Adrenal gland (tissue), 19 donors: ENCODE measurements at regions of chr4 and their contacts with region 1.

Region 1: DNA sequence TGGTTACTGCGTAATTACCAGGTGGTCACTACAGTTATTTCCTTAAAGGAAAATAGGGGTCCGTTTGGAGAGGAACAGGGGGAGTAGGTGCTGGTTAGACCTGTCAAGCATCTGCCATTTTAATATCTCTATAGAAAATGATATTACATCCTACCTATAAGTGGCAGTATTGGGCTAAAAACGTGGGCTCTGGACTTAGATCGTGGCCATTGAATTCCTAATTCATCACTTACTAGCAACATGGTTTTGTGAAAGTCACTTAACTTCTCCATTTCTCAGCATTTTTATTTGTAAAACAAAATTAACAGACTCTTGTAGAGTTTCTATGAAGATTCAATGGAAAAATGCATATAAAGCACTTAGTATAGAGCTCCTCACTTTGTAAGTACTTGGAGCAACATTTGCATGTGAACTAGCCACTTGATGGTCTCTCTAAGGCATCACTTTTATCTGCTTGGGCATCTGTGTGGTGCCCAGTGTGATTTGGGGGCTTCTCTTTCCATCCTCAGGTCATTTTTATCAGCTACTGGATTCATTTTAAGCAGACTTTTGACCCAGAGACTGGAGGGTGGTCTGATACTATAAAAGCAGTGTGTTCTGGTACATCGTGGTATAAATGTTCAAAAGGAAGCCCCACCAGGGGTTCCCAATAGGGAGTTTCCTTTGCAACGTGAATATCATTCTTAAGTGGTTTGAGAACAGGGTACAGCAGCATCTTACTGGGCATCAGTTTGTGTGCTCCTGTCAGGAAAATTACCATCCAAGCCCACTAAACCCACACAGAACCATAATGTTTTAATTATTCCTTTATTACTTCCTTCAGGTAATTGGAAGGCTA is 42.7 kb upstream of the RASSF6 start:
- DNase-seq: peak in 1 of 7 donors; percentile 11
- H3K4me3 ChIP-seq: no peak overlapping the region
- H3K27ac ChIP-seq: no peak overlapping the region
- H3K4me1 ChIP-seq: no peaks in the 10 kb centered on the region
- H3K27me3 ChIP-seq: no peaks in the 10 kb centered on the region
- CTCF ChIP-seq: peak; percentile 44 to 70 (median 62)
- POLR2A ChIP-seq: no peak

Region 2: GRCh38 chr4:73869130-73870050 is 206.5 kb after region 1 on chr4 and contains the start of gene CXCL1:
- intact Hi-C with region 1: loop called in 1 of 2 experiments (anchors 10 kb)
- DNase-seq: peak in 4 of 7 donors; percentile 7 to 27 (median 25)
- H3K4me3 ChIP-seq: peak within 1 kb of the TSS in 2 of 4 donors; percentile 30 to 46
- H3K27ac ChIP-seq: peak within 1 kb of the TSS in 1 of 5 donors; percentile 13
- H3K4me1 ChIP-seq: peaks cover 0 to 6% of the 10 kb centered on the region in 2 donors
- H3K27me3 ChIP-seq: no peaks in the 10 kb centered on the region
- CTCF ChIP-seq: no peak
- POLR2A ChIP-seq: no peak
- total RNA-seq, gene CXCL1: 0.84 to 6.1 (median 1.6) TPM in 6 of 9 donors, not detected in the others

Region 3: GRCh38 chr4:73944061-73944875 is 281.3 kb after region 1 on chr4:
- intact Hi-C with region 1: loop called in 1 of 2 experiments (anchors 10 kb)
- DNase-seq: peak in 4 of 7 donors; percentile 12 to 23 (median 18)
- H3K4me3 ChIP-seq: peak overlapping the region in 1 of 4 donors; percentile 48
- H3K27ac ChIP-seq: no peak overlapping the region
- H3K4me1 ChIP-seq: peaks cover 0 to 7% of the 10 kb centered on the region in 2 donors
- H3K27me3 ChIP-seq: peaks cover 38% of the 10 kb centered on the region
- CTCF ChIP-seq: no peak
- POLR2A ChIP-seq: no peak

Region 4: GRCh38 chr4:74133786-74134499 is 471.0 kb after region 1 on chr4:
- intact Hi-C with region 1: loop called (anchors 5 to 10 kb)
- DNase-seq: peak; percentile 80 to 94 (median 82)
- H3K4me3 ChIP-seq: no peak overlapping the region
- H3K27ac ChIP-seq: no peak overlapping the region
- H3K4me1 ChIP-seq: no peaks in the 10 kb centered on the region
- H3K27me3 ChIP-seq: no peaks in the 10 kb centered on the region
- CTCF ChIP-seq: peak; percentile 51 to 89 (median 87)
- POLR2A ChIP-seq: no peak